Cardiac septum (tissue), 1 donor: ENCODE measurements at regions of chr15 and their contacts with region 1.

Region 1: GRCh38 chr15:81274931-81275707 is 48.8 kb downstream of the STARD5 start:
- DNase-seq: peak; percentile 89

Region 2: GRCh38 chr15:81176291-81176893 is 98.7 kb before region 1 on chr15:
- intact Hi-C with region 1: no loop called
- DNase-seq: no peak

Region 3: GRCh38 chr15:81336568-81336967 is 61.4 kb after region 1 on chr15:
- intact Hi-C with region 1: loop called (anchors 2 kb)
- DNase-seq: no peak

Region 4: GRCh38 chr15:81400640-81401236 is 125.6 kb after region 1 on chr15:
- intact Hi-C with region 1: loop called (anchors 2 kb)
- DNase-seq: no peak